ENCODE measurements at regions of chr10 and their contacts with region 1.

Region 1: DNA sequence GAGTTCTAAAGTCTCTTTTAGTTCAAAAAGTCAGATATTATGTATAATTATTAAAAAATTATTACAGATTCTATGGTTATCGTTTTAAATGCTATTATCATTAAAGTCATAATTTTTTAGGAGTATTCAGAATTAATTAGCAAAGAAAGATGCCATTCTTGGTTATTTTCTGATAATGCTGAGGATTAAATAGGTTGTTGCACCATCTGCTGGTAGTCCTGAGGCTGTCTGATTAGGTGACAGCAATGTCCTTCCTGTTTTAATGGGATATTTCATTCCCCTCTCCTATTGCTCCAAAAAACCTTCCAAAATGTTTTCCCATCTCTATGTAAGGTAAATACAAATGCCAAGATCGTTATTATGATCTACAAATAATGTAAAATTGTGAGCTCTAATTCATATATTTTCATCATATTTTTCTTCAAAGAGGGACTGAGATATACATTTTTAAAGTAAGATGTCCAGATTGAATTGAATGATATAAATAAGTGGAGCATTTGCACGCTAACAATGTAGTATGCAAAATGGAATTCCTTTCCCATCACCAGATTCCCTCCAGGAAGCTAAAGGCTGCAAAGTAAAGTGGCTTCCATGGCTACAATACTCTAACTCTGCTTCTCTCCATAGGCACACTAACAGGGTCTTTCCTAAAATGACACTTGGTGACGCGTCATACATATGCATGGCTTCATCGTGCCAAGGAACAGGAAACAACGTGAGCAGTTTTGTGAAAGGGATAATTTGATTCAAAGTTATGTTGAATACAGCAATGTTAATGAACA is 58.8 kb upstream of the AKR1E2 start:
- DNase-seq: peak; percentile 13 to 57
- ATAC-seq: peak in 1 of 2 experiments; percentile 66; a peak in 3 of 6 replicates
- H3K4me3 ChIP-seq: no peak overlapping the region
- H3K27ac ChIP-seq: peak overlapping the region; percentile 59 to 72
- H3K4me1 ChIP-seq: peaks cover 43% of the 10 kb centered on the region
- CTCF ChIP-seq: peak; percentile 93
- EP300 ChIP-seq: no peak
- POLR2A ChIP-seq: no peak
- RAD21 ChIP-seq: peak; percentile 97

Region 2: DNA sequence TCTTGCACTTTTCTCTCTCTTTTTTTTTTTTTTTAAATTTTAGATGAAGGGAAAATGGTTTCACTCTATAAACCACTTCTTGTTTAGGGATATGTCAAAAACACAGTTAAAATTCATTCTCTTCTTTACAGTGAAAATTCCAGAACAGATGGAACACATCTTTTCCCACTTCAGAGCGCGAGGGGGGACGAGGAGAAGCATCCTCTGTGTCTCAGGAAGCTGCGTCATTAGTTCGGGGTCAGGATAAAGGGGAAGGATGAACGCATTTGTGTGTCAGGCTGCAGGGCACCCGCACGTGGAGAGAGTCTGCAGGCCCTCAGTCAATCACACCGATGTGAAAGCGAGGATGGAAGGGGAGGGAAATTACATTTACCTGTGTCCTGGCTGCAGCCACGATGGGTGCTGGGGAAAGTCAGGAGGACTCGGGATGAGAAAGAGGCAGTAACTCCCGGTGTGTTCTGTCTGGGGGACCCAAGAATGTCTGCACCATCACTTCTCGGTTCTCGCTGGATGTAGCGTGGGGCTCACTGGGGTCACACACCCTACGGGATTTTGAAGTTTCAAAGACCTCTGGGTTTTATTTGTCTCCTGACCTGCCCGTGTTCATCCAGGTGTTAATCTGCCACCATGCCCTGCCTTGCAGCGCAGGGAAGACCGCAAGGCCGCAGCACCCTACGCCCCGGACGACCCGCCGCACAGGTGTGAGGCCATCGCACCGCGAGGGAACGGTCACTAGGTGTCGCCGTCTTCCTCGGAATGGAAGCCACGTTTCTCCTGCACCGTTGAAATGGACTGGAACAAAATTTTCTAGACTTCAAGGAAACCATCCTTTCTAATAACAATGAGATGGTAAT is 1527.9 kb before region 1 on chr10:
- CTCF ChIA-PET with region 1: interaction called, 15 read pairs
- POLR2A ChIA-PET with region 1: no interaction called
- DNase-seq: peak; percentile 57 to 71
- ATAC-seq: peak; percentile 79 to 96; a peak in 5 of 6 replicates
- H3K4me3 ChIP-seq: no peak overlapping the region
- H3K27ac ChIP-seq: peak overlapping the region; percentile 46 to 65; a peak in 5 of 6 replicates
- H3K4me1 ChIP-seq: no peaks in the 10 kb centered on the region
- CTCF ChIP-seq: peak; percentile 91
- EP300 ChIP-seq: no peak
- POLR2A ChIP-seq: no peak
- RAD21 ChIP-seq: peak; percentile 97 to 98

Region 3: DNA sequence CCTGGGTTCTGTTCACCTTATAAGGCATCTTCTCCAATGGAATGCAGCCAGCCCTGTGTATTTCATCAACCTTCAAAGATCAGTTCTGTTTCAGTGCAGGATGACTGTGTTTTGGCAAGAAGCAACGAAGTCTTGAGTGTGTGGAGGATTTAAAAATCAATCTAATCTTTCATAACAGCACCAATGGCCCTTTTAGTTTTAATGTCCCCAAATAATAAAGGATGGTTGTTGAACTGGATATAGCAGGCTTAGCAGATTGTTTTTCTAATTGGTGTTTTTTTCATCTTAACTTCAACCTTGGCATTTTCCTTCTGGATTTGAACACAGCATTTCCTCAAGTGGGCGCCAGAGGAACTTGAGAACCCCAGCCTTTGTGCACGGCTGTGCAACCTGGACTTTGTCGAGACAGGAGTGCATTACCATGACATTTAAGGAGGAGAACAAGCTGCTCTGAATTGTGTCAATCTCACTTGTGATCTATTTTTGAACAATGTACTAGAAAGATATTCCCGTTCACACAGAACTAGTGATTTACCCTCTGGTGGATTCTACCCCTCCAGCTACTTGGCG is 254.5 kb before region 1 on chr10:
- CTCF ChIA-PET with region 1: interaction called, 10 read pairs
- POLR2A ChIA-PET with region 1: no interaction called
- DNase-seq: peak; percentile 33 to 75
- ATAC-seq: peak; percentile 64 to 87; a peak in 5 of 6 replicates
- H3K4me3 ChIP-seq: no peak overlapping the region
- H3K27ac ChIP-seq: peak overlapping the region in 1 of 2 experiments; percentile 8; a peak in 2 of 6 replicates
- H3K4me1 ChIP-seq: no peaks in the 10 kb centered on the region
- CTCF ChIP-seq: peak; percentile 78
- EP300 ChIP-seq: no peak
- POLR2A ChIP-seq: no peak
- RAD21 ChIP-seq: peak; percentile 83 to 93

Region 4: DNA sequence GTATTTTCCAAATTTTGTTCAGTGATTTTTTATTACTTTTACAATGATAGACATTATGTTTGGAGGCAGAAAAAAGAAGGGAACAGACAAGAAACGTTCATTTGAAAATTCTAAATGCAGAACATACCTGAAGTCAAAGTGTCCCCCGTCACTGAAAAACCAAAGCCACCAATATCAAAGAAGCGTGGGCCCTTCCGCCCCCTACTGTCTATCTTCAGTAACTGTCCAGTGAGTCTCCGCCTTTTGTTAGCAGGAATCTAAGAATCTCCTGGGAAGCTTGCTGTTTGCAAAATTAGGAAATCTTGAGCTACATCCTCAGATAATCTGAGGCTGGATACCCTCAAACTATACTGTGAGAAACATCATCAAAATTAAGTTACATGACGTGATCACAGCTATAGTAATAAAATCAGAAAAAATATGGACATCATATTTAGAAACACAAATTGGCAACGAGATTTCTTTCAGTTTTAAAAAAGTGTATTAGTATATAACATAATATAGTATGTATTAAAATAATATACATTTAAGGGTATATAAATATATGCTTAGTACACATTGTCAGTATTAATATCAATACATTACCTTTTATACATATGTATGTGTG is 110.5 kb before region 1 on chr10:
- CTCF ChIA-PET with region 1: interaction called, 15 read pairs
- POLR2A ChIA-PET with region 1: no interaction called
- DNase-seq: peak; percentile 34 to 72
- ATAC-seq: peak in 1 of 2 experiments; percentile 65; a peak in 2 of 6 replicates
- H3K4me3 ChIP-seq: no peak overlapping the region
- H3K27ac ChIP-seq: peak overlapping the region; percentile 53 to 63; a peak in 2 of 6 replicates
- H3K4me1 ChIP-seq: peaks cover 26% of the 10 kb centered on the region
- CTCF ChIP-seq: peak; percentile 86
- EP300 ChIP-seq: no peak
- POLR2A ChIP-seq: no peak
- RAD21 ChIP-seq: peak; percentile 91 to 92

Region 5: GRCh38 chr10:4790045-4790444 is 22.8 kb after region 1 on chr10:
- CTCF ChIA-PET with region 1: no interaction called
- POLR2A ChIA-PET with region 1: no interaction called
- DNase-seq: no peak
- ATAC-seq: no peak
- H3K4me3 ChIP-seq: no peak overlapping the region
- H3K27ac ChIP-seq: no peak overlapping the region
- H3K4me1 ChIP-seq: no peaks in the 10 kb centered on the region
- CTCF ChIP-seq: no peak
- EP300 ChIP-seq: no peak
- POLR2A ChIP-seq: no peak
- RAD21 ChIP-seq: no peak

Measured in A549 (cell line).